ENCODE measurements at regions of chr15 and their contacts with region 1.

Region 1: DNA sequence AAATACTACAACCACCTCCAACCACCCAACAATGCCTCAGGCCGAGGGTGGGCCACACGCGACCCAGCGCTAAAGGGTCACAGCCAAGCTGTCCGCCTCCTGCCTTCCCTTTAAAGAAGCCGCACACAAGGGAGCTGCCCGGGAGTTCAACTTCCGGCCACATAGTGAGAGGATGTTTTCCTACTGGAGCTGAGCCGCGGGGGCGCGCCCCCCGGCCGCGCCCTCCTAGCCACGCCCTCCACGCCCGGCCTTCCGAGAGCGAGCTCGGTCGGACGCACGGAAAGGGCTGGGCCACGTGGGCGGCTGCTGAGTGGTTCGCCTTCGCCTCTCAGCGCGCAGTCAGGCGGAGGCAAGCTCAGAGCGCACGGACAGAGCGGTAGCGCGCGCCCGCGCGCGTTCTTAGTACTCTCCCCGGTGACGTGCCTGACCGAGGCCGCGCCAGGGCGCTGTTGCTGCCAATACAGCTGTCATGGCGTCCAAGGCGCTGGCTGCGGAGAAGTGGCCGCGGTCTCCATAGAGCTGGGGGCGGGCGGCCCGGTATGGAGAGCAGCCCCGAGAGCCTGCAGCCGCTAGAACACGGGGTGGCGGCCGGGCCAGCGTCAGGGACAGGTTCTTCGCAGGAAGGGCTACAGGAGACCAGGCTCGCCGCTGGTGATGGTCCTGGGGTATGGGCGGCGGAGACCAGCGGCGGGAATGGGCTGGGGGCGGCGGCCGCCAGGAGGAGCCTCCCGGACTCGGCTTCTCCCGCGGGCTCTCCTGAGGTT is at the start of gene MINDY2:
- DNase-seq: peak; percentile 94
- ATAC-seq: peak; percentile 97
- H3K4me3 ChIP-seq: peak within 1 kb of the TSS; percentile 91
- H3K27ac ChIP-seq: peak within 1 kb of the TSS; percentile 82
- H3K4me1 ChIP-seq: no peaks in the 10 kb centered on the region
- H3K27me3 ChIP-seq: no peaks in the 10 kb centered on the region
- CTCF ChIP-seq: peak; percentile 45 to 46 (median 45); a peak in 4 of 6 replicates
- EP300 ChIP-seq: no peak
- POLR2A ChIP-seq: peak; percentile 93
- RAD21 ChIP-seq: peak; percentile 33; the same call in 1 of the 2 replicates
- polyA plus RNA-seq, gene MINDY2: 0.73 to 0.74 TPM

Region 2: DNA sequence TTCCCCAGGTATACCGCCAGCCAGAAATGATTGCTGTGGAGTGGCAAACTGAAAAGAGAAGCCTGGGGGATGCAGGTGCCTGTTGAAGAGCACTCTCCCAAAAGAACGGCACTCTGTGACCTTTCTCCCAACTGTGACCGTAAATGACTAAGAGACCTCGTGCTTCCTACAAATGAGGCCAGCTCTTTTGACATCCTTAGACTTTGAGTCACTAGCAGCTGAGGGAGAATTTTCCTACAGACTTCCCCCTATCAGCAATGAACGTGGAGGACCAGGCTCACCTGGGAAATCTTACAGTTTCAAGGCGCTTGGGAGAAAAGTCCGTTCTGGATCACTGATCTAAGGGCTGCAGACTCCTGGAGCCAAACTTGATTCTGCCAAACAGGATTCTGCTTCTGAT is 624.3 kb before region 1 on chr15:
- CTCF ChIA-PET with region 1: no interaction called
- POLR2A ChIA-PET with region 1: no interaction called
- RAD21 ChIA-PET with region 1: no interaction called
- SMC1A ChIA-PET with region 1: no interaction called
- in situ Hi-C with region 1: no loop called
- intact Hi-C with region 1: no loop called
- DNase-seq: no peak
- ATAC-seq: no peak
- H3K4me3 ChIP-seq: no peak overlapping the region
- H3K27ac ChIP-seq: no peak overlapping the region
- H3K4me1 ChIP-seq: no peaks in the 10 kb centered on the region
- H3K27me3 ChIP-seq: 0 out of 4 replicates have a peak, but pooled peaks cover 0 to 2% of the 10 kb centered on the region in 2 experiments
- CTCF ChIP-seq: no peak
- EP300 ChIP-seq: no peak
- POLR2A ChIP-seq: no peak
- RAD21 ChIP-seq: no peak

Region 3: DNA sequence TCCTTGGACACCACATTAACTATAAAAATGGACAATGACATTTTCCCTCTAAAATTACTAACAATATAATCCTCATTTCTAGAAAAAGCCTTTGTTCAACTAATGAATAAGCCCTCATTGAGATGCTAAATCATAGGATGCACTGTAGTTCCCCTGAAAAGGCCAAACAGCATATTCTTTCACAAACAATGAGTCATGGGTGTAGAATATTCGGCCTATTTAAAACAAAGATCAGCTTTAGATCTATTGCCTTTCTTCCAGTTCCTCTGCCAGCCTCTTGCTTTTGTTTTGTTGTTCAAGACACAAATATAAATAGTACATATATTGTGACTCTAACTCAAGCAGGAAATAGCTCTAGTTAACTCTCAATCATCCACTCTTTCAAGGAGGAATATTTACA is 104.1 kb before region 1 on chr15:
- CTCF ChIA-PET with region 1: no interaction called
- POLR2A ChIA-PET with region 1: no interaction called
- RAD21 ChIA-PET with region 1: no interaction called
- SMC1A ChIA-PET with region 1: no interaction called
- in situ Hi-C with region 1: no loop called
- intact Hi-C with region 1: no loop called
- DNase-seq: no peak
- ATAC-seq: no peak
- H3K4me3 ChIP-seq: no peak overlapping the region
- H3K27ac ChIP-seq: no peak overlapping the region
- H3K4me1 ChIP-seq: no peaks in the 10 kb centered on the region
- H3K27me3 ChIP-seq: no peaks in the 10 kb centered on the region
- CTCF ChIP-seq: no peak
- EP300 ChIP-seq: no peak
- POLR2A ChIP-seq: no peak
- RAD21 ChIP-seq: no peak

Region 4: DNA sequence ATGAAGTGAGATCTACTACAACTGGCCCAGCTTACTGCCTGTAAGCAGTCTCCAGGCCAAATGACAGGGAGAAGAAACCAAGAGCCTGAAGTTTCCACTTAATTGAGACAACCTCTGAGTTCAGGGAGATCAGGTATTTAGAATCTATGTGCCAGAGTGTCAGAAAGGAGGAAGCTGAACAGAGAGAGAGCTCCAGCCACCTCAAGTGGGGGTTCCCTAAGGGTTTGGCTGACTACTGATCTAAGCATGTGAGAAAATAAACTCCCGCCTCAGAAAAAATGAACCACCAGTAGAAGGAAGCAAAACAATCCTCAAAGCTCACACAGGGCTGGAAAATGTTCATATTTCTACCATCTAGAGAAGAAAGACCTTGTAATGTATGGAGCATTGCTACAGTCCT is 46.6 kb before region 1 on chr15:
- CTCF ChIA-PET with region 1: interaction called, 3 read pairs
- POLR2A ChIA-PET with region 1: interaction called, 7 read pairs
- RAD21 ChIA-PET with region 1: interaction called, 17 read pairs
- SMC1A ChIA-PET with region 1: interaction called, 5 read pairs
- in situ Hi-C with region 1: no loop called
- intact Hi-C with region 1: no loop called
- DNase-seq: peak; percentile 71
- ATAC-seq: peak; percentile 93
- H3K4me3 ChIP-seq: no peak overlapping the region; the same call in 1 of the 2 replicates
- H3K27ac ChIP-seq: peak overlapping the region; percentile 78
- H3K4me1 ChIP-seq: peaks cover 9% of the 10 kb centered on the region
- H3K27me3 ChIP-seq: no peaks in the 10 kb centered on the region
- CTCF ChIP-seq: no peak
- EP300 ChIP-seq: no peak
- POLR2A ChIP-seq: no peak
- RAD21 ChIP-seq: no peak

Region 5: DNA sequence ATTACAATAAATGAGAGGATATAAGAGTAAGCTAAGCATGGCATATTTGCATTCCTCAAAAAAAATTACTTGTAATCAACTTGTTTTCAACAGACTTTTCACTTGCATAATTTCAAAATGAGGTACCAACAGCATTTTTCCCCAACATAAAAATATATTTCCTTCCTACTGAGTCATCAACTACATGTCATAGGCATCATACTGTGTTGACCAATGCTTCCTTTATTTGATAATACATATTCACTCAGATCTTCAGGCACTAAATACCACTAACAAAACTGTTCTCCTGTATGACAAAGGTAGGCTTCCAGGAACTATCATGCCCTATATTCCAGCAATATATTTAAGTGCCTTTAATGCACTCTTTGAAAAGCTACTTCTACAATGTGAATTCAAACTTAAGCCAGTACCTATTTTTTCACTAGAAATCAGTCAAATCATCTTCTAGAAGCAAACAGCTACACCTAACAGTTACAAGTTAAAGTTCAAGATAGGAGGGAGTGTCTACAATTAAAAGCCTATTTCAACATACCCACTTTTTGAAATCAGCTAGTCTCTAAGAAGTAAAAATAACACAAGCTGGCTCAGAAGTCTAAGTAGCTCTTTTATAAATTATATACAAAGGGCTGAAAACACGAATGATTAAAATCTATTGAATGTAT is 32.9 kb before region 1 on chr15:
- CTCF ChIA-PET with region 1: interaction called, 4 read pairs
- POLR2A ChIA-PET with region 1: interaction called, 6 read pairs
- RAD21 ChIA-PET with region 1: interaction called, 6 read pairs
- SMC1A ChIA-PET with region 1: interaction called, 10 read pairs
- in situ Hi-C with region 1: no loop called
- intact Hi-C with region 1: no loop called
- DNase-seq: no peak
- ATAC-seq: no peak
- H3K4me3 ChIP-seq: no peak overlapping the region
- H3K27ac ChIP-seq: no peak overlapping the region
- H3K4me1 ChIP-seq: no peaks in the 10 kb centered on the region
- H3K27me3 ChIP-seq: no peaks in the 10 kb centered on the region
- CTCF ChIP-seq: no peak
- EP300 ChIP-seq: no peak
- POLR2A ChIP-seq: no peak
- RAD21 ChIP-seq: no peak

Region 6: GRCh38 chr15:58749532-58750337 is 21.3 kb before region 1 on chr15 and contains the start of gene ADAM10:
- CTCF ChIA-PET with region 1: interaction called, 28 read pairs
- POLR2A ChIA-PET with region 1: interaction called, 21 read pairs
- RAD21 ChIA-PET with region 1: interaction called, 38 read pairs
- SMC1A ChIA-PET with region 1: interaction called, 31 read pairs
- in situ Hi-C with region 1: no loop called
- intact Hi-C with region 1: loop called (anchors 1 kb)
- DNase-seq: peak; percentile 90
- ATAC-seq: peak; percentile 91
- H3K4me3 ChIP-seq: peak within 1 kb of the TSS; percentile 94
- H3K27ac ChIP-seq: peak within 1 kb of the TSS; percentile 91
- H3K4me1 ChIP-seq: no peaks in the 10 kb centered on the region
- H3K27me3 ChIP-seq: no peaks in the 10 kb centered on the region
- CTCF ChIP-seq: no peak
- EP300 ChIP-seq: no peak
- POLR2A ChIP-seq: peak; percentile 80
- RAD21 ChIP-seq: no peak; the same call in 1 of the 2 replicates
- polyA plus RNA-seq, gene ADAM10: 10.0 to 11.1 TPM

Region 7: GRCh38 chr15:58758138-58758537 is 12.9 kb before region 1 on chr15:
- CTCF ChIA-PET with region 1: interaction called, 5 read pairs
- POLR2A ChIA-PET with region 1: interaction called, 11 read pairs
- RAD21 ChIA-PET with region 1: interaction called, 5 read pairs
- SMC1A ChIA-PET with region 1: interaction called, 21 read pairs
- in situ Hi-C with region 1: no loop called
- intact Hi-C with region 1: no loop called
- DNase-seq: no peak
- ATAC-seq: peak; percentile 72
- H3K4me3 ChIP-seq: no peak overlapping the region
- H3K27ac ChIP-seq: no peak overlapping the region
- H3K4me1 ChIP-seq: no peaks in the 10 kb centered on the region
- H3K27me3 ChIP-seq: no peaks in the 10 kb centered on the region
- CTCF ChIP-seq: peak; percentile 36 to 65 (median 44); a peak in 5 of 6 replicates
- EP300 ChIP-seq: no peak
- POLR2A ChIP-seq: no peak
- RAD21 ChIP-seq: peak; percentile 72

Region 8: DNA sequence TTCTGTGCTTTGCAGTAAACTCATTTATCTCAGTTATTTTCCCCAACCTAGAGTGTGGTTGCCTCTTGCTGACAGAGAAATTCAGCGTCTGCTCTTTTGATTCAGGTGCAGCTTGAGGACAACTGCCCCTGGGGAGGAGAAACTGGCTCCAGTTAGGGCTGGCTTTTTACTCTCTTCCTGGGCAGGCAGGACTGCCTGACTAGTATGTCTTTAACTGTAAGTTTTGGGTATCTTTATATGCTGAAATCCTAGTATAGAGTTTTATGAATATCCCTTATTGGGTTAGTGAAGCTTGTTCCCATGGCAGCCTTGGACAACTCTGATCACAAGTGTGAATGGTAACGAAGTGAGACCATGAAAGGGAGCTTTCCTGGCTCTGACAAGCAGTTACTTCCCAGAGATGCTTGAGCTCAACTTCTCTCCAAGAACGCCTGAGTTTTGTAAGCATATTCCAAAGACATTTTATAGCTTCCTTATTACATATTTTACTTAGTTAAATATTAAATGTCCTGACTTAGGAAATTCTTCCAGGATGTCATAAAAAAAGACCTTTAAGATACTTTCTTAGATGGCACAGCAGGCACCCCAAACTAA is 361.0 kb after region 1 on chr15:
- CTCF ChIA-PET with region 1: no interaction called
- POLR2A ChIA-PET with region 1: no interaction called
- RAD21 ChIA-PET with region 1: no interaction called
- SMC1A ChIA-PET with region 1: no interaction called
- in situ Hi-C with region 1: no loop called
- intact Hi-C with region 1: no loop called
- DNase-seq: no peak
- ATAC-seq: no peak
- H3K4me3 ChIP-seq: no peak overlapping the region
- H3K27ac ChIP-seq: no peak overlapping the region
- H3K4me1 ChIP-seq: no peaks in the 10 kb centered on the region
- H3K27me3 ChIP-seq: no peaks in the 10 kb centered on the region
- CTCF ChIP-seq: no peak
- EP300 ChIP-seq: no peak
- POLR2A ChIP-seq: peak; percentile 1; the same call in 1 of the 2 replicates
- RAD21 ChIP-seq: no peak